ENCODE measurements at regions of chr3 and their contacts with region 1.

Region 1: DNA sequence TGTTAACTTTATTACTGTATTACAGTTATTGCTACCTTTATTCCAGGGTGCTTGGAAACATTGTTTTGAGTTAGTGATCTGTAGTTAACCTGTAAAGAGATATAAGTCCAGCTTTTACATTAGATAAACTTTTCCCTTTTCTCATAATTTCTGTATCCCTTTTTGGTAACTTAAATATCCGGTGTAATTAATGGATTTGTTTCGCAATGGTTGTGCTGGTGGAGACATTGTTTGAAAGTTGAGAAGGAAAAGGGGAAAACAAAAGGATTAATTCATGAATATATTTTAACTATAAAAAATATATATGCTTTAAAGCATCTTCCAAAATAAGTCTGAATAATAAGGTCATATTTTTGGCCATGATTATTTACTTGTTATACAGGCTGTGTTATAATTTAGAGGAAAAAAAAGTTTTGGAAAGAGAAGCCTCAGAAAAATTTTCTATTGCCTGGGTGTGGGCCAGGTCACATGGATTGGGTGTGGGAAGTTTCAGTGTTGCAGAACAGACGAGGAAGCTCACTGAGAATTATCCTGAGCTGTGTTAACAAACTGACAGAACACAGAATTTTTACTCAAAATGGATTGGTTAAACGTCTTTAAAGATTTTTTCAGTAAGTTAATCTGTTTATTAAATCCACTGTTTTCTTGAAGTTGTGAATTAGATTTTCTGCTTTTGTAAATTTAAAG is 27.7 kb upstream of the IL20RB start:
- DNase-seq: no peak
- H3K4me3 Mint-ChIP-seq: no peak overlapping the region
- H3K27ac Mint-ChIP-seq: no peak overlapping the region
- H3K4me1 Mint-ChIP-seq: peaks cover 51% of the 10 kb centered on the region
- H3K27me3 Mint-ChIP-seq: no peaks in the 10 kb centered on the region

Region 2: DNA sequence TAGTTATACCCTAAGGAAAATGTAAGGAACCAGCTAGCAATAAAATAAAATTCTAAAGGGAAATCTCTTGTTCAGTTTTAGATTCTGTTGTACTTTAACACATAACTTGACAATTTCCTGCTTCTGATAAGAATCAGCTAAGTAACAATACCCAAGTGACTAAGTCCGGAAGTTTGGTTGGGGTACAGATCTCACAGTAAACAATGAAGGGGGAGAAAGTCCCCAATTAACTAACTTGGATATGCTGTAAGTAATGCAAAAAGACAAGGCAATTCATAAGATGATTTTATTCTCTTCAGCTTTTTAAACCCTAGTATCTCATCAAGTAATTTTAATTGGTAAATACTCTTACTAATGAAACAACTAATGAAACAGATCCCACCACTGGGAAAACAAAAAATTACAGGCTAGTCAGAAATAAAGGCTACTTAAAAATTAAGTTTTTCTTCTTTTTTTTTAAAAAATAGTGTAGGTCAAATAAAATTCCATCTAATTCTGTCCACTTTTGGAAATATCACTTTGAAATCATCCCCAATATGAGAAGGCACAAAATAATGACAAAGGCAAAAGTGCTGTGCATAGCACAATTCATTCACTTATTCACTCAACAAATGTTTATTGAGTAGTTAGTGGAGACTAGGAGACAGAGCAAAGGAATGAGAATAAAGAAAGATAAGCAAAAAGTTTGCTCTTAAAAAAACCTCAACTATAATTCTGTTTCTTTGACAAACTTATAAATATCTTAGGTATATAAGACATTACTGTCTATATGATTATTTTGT is 10.1 kb before region 1 on chr3:
- CTCF ChIA-PET with region 1: no interaction called
- intact Hi-C with region 1: loop called (anchors 1 kb)
- DNase-seq: peak; percentile 21
- H3K4me3 Mint-ChIP-seq: no peak overlapping the region
- H3K27ac Mint-ChIP-seq: no peak overlapping the region
- H3K4me1 Mint-ChIP-seq: peaks cover 76% of the 10 kb centered on the region
- H3K27me3 Mint-ChIP-seq: no peaks in the 10 kb centered on the region